ENCODE measurements at regions of chr7 and their contacts with region 1.

Region 1: GRCh38 chr7:94449148-94449725 is 54.5 kb downstream of the COL1A2 start:
- DNase-seq: peak; percentile 24
- H3K4me3 ChIP-seq: no peak overlapping the region
- H3K27ac ChIP-seq: no peak overlapping the region
- H3K4me1 ChIP-seq: no peaks in the 10 kb centered on the region
- H3K27me3 ChIP-seq: peaks cover 3% of the 10 kb centered on the region
- CTCF ChIP-seq: peak; percentile 45 to 65

Region 2: DNA sequence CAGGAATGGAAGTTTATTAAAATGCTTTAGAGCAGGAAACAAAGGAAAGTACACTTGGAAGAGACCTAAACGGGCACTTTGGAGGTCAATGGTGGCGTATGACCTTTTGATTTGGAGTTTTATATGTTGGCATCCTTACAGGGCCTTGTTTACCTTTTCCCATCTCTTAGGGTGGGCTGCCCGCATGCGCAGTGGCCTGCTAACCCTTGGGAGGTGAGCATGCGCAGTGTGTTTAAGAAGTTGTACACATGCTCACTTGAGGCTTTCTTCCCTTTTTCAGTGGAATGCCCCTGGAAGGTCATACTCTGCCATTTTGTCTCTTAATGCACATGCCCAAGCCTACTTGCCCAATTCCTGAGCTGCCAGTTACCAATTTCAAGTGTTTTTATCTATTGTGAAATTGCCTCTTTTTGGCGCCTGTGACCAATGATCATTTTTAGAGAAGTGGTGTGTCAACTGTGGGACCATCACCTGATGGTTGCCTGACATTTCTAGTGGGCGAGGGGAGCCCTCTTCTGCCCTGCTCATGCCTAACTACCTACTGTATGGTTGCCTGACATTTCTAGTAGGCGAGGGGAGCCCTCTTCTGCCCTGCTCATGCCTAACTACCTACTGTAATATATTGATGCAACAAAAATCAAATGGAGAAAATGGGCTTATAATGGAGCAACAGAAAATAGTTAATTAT is 596.1 kb after region 1 on chr7:
- CTCF ChIA-PET with region 1: no interaction called
- dilution Hi-C with region 1: no loop called
- in situ Hi-C with region 1: loop called in 1 of 2 experiments (anchors 25 kb)
- intact Hi-C with region 1: loop called (anchors 1 kb)
- DNase-seq: peak; percentile 1
- H3K4me3 ChIP-seq: no peak overlapping the region
- H3K27ac ChIP-seq: no peak overlapping the region
- H3K4me1 ChIP-seq: no peaks in the 10 kb centered on the region
- H3K27me3 ChIP-seq: peaks cover 2% of the 10 kb centered on the region
- CTCF ChIP-seq: peak in 1 of 2 donors; percentile 46

Region 3: DNA sequence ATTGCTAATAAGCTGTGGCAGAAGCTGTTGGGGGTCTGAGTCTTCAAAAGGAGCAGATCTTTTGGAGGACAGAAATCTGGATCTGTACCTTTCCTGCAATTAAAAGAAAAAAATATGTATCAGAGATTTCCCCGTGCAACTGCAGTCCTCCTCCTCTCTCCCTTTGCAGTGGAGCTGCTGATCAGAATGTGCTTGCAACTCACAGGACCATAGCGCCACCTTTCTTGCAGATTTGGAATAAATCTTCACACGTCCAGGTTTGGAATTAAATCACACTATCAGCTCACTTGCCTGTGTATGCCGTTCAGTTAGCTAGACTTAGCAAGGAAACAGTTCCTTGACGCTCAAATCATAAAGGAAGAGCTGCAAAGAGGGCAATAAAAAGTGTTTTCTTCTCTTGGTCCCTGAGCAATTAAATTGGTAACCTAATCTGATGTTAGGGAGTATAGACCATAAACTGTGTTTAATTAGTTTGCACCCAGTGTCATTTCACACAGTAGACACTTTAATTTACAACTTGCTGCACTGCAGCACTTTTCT is 797.7 kb after region 1 on chr7:
- CTCF ChIA-PET with region 1: no interaction called
- dilution Hi-C with region 1: no loop called
- in situ Hi-C with region 1: no loop called
- intact Hi-C with region 1: loop called (anchors 1 kb)
- DNase-seq: peak; percentile 48
- H3K4me3 ChIP-seq: no peak overlapping the region
- H3K27ac ChIP-seq: no peak overlapping the region
- H3K4me1 ChIP-seq: no peaks in the 10 kb centered on the region
- H3K27me3 ChIP-seq: peaks cover 2% of the 10 kb centered on the region
- CTCF ChIP-seq: peak; percentile 77 to 81